Right ventricle myocardium superior (tissue), 1 donor: ENCODE measurements at regions of chr13 and their contacts with region 1.

Region 1: GRCh38 chr13:110561344-110562035 is at the start of gene RAB20:
- DNase-seq: peak; percentile 92
- ATAC-seq: peak; percentile 83
- total RNA-seq, gene RAB20: 10.0 TPM

Region 2: GRCh38 chr13:110509971-110510786 is 51.3 kb before region 1 on chr13:
- intact Hi-C with region 1: loop called (anchors 10 kb)
- DNase-seq: peak; percentile 59
- ATAC-seq: peak; percentile 14

Region 3: GRCh38 chr13:110520431-110521295 is 40.8 kb before region 1 on chr13:
- intact Hi-C with region 1: loop called (anchors 5 kb)
- DNase-seq: peak; percentile 84
- ATAC-seq: peak; percentile 64